Prostate gland (tissue), 2 donors: ENCODE measurements at regions of chr3 and their contacts with region 1.

Region 1: GRCh38 chr3:196684548-196685407 is 27.3 kb downstream of the CEP19 start:
- DNase-seq: peak; percentile 40
- H3K4me3 ChIP-seq: no peak overlapping the region
- H3K27ac ChIP-seq: no peak overlapping the region
- H3K4me1 ChIP-seq: no peaks in the 10 kb centered on the region
- H3K27me3 ChIP-seq: no peaks in the 10 kb centered on the region
- CTCF ChIP-seq: peak; percentile 69 to 97 (median 88)
- POLR2A ChIP-seq: no peak

Region 2: DNA sequence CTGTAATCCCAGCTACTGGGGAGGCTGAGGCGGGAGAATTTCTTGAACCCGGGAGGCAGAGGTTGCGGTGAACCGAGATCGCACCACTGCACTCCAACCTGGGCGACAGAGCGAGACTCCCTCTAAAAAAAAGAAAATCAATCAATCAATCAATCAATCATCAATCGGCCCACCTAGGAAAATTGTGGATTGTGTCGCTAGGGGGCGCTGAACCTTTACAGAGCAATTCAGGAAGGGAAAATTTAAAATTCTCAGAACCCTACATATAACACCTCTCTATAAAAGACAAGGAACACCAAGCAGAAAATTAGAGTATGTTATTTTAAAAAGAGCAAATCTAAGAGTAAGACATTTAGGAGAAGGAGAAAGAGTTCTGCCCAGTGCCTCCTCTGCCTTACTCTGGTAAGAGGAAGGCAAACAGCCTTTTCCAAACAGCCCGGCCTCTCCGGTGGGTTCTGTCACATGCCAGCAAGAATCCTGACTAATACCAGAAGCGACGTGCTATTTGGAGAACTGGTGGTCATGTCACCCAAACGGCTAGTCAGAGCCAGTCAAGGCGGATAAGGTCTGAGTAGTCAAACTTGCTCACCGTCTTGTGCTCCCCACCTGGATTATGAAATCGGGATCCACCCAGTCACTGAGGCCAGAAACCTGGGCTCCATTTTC is 147.3 kb before region 1 on chr3:
- intact Hi-C with region 1: loop called (anchors 5 kb)
- DNase-seq: no peak
- H3K4me3 ChIP-seq: no peak overlapping the region
- H3K27ac ChIP-seq: no peak overlapping the region
- H3K4me1 ChIP-seq: no peaks in the 10 kb centered on the region
- H3K27me3 ChIP-seq: no peaks in the 10 kb centered on the region
- CTCF ChIP-seq: peak in 3 of 4 experiments; percentile 34 to 48 (median 45)
- POLR2A ChIP-seq: no peak

Region 3: DNA sequence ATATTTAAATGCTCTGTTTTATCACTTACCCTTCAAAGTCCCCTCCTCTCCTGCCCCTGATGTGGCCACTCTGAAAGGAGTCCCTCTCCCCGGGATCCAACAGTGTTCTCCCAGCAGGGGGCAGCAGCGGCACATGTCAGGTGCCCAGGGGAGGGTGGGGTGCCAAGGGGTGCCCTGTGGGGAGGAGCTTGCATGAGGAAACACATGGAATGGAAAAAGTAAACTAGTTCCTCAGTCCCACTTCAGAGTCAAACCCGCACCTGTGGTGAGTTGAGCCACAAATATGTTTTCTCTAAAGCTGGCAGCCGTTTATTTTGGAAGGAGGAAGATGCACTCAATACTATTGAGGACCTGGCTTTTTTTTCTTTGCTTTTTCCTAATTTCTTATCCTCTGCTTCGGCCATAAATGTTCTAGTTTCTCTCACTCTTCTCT is 75.4 kb before region 1 on chr3:
- intact Hi-C with region 1: loop called (anchors 5 kb)
- DNase-seq: peak; percentile 83
- H3K4me3 ChIP-seq: no peak overlapping the region
- H3K27ac ChIP-seq: no peak overlapping the region
- H3K4me1 ChIP-seq: no peaks in the 10 kb centered on the region
- H3K27me3 ChIP-seq: no peaks in the 10 kb centered on the region
- CTCF ChIP-seq: peak; percentile 55 to 92 (median 82)
- POLR2A ChIP-seq: no peak